ENCODE measurements at regions of chr11 and their contacts with region 1.

Region 1: GRCh38 chr11:30314625-30315024 is 8.3 kb upstream of the ARL14EP start:
- DNase-seq: no peak
- CTCF ChIP-seq: peak; percentile 51

Region 2: DNA sequence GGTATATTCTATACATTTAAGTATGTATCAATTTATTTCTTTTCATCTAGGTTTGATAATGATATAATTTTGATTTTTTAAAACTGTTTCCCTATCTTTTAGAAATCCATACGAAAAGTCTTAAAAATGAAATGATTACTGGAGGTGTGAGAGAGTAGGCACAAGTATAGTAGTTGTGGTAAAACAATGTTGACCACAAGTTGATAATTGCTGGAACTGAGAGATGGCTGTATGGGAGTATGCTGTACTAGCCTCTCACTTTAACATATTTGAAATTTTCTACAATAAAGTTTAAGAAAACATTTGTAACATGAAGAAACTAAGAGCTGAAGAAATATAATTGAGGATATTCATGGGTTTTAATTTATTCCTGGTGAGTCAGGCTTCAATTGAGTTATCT is 53.8 kb before region 1 on chr11:
- CTCF ChIA-PET with region 1: no interaction called
- POLR2A ChIA-PET with region 1: no interaction called
- DNase-seq: no peak
- CTCF ChIP-seq: no peak

Region 3: DNA sequence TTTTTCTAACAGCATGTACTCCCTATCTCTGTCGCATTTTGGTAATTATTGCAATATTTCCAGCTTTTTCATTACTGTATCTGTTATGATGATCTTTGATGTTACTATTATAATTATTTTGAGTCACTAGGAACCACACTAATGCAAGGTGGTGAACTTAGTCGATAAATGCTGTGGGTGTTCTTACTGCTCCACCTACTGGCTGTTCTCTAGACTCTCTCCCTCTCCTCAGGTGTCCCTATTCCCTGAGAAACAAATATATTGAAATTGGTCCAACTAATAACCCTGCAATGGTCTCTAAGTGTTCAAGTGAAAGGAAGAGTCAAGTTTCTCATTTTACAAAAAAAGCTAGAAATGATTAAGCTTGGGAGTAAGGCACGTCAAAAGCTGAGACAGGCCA is 18.8 kb after region 1 on chr11:
- CTCF ChIA-PET with region 1: interaction called, 19 read pairs
- POLR2A ChIA-PET with region 1: no interaction called
- DNase-seq: no peak
- CTCF ChIP-seq: peak; percentile 44

Region 4: GRCh38 chr11:30545507-30545906 is 230.9 kb after region 1 on chr11:
- CTCF ChIA-PET with region 1: no interaction called
- POLR2A ChIA-PET with region 1: no interaction called
- DNase-seq: no peak
- CTCF ChIP-seq: no peak

Measured in GM10248 (cell line).